ENCODE measurements at regions of chr11 and their contacts with region 1.

Region 1: GRCh38 chr11:128262463-128263345 is 324.7 kb downstream of the ETS1 start:
- DNase-seq: peak; percentile 54
- ATAC-seq: peak; percentile 69
- H3K4me3 ChIP-seq: peak overlapping the region in 4 of 5 experiments; percentile 13 to 54 (median 26)
- H3K4me3 Mint-ChIP-seq: peak overlapping the region; percentile 81
- H3K27ac ChIP-seq: peak overlapping the region; percentile 63 to 64
- H3K27ac Mint-ChIP-seq: peak overlapping the region; percentile 75
- H3K4me1 ChIP-seq: peaks cover 50 to 57% of the 10 kb centered on the region in 2 donors
- H3K4me1 Mint-ChIP-seq: peaks cover 69% of the 10 kb centered on the region
- H3K27me3 ChIP-seq: no peaks in the 10 kb centered on the region
- H3K27me3 Mint-ChIP-seq: no peaks in the 10 kb centered on the region
- CTCF ChIP-seq: no peak

Region 2: DNA sequence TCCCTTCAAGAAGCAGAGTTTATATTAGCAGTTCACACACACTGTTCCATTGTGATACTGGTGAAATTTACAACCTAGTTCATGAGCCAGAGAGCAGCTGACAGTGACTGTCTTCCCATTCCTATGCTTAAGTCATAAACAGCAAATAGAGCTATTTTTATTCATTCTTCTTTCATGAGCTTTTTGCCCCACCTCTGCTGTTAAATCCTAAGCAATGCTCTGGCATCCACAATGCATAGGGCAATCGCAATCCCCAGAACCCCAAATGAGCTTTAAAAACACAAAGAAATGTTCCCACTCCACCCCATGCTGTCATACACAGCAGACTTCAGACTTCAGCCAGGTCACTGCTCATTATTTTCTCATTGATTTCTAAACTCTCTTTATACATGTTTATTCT is 17.2 kb after region 1 on chr11:
- CTCF ChIA-PET with region 1: interaction called, 7 read pairs
- POLR2A ChIA-PET with region 1: interaction called, 4 read pairs
- intact Hi-C with region 1: loop called (anchors 2 kb)
- DNase-seq: no peak
- ATAC-seq: no peak
- H3K4me3 ChIP-seq: no peak overlapping the region
- H3K4me3 Mint-ChIP-seq: no peak overlapping the region
- H3K27ac ChIP-seq: no peak overlapping the region
- H3K27ac Mint-ChIP-seq: no peak overlapping the region
- H3K4me1 ChIP-seq: peaks cover 7 to 13% of the 10 kb centered on the region in 2 donors
- H3K4me1 Mint-ChIP-seq: peaks cover 17% of the 10 kb centered on the region
- H3K27me3 ChIP-seq: no peaks in the 10 kb centered on the region
- H3K27me3 Mint-ChIP-seq: no peaks in the 10 kb centered on the region
- CTCF ChIP-seq: no peak